ENCODE measurements at regions of chr6 and their contacts with region 1.

Region 1: GRCh38 chr6:138817822-138818308 is 22.0 kb downstream of the ECT2L start:
- DNase-seq: no peak
- ATAC-seq: peak; percentile 37 to 38
- H3K4me3 ChIP-seq: no peak overlapping the region
- H3K27ac ChIP-seq: no peak overlapping the region
- H3K4me1 ChIP-seq: peaks cover 2% of the 10 kb centered on the region
- H3K27me3 ChIP-seq: no peaks in the 10 kb centered on the region

Region 2: DNA sequence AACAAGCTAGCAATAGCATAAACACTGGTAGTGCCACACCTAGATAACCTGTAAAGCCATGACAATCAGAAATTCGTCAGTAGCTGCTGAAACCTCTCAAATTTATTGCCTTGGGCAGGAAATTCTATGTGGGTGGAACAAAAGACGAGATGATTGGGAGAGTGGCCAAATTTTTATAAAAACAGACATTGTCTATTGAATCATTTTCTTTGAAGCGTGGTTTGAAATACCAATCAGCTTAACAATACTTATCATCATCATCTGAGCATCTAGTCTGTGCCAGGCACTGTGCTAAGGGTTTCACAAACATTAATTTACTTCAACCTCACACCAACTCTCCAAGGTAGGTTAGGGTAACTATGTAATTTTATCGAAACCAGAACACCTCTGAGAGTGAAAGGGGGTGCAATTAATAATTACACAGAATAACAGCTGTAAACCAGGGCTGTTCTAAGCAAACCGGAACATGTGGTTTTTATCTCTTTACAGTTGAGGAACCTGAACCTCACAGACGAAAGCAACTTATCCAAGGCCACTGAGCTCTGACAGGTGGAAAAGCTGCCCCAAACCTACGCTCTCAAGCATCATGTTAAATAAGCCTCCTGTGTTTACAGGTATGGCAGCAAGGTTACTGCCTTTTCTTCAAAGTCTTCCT is 362.0 kb before region 1 on chr6:
- intact Hi-C with region 1: no loop called
- DNase-seq: no peak
- ATAC-seq: peak in 1 of 2 donors; percentile 41
- H3K4me3 ChIP-seq: no peak overlapping the region
- H3K27ac ChIP-seq: no peak overlapping the region
- H3K4me1 ChIP-seq: peaks cover 3% of the 10 kb centered on the region
- H3K27me3 ChIP-seq: no peaks in the 10 kb centered on the region

Region 3: GRCh38 chr6:138987640-138988468 is 170.0 kb after region 1 on chr6 and contains the start of gene REPS1:
- intact Hi-C with region 1: loop called (anchors 1 to 5 kb)
- DNase-seq: peak; percentile 93 to 97 (median 96)
- ATAC-seq: peak; percentile 98 to 99
- H3K4me3 ChIP-seq: peak within 1 kb of the TSS; percentile 95
- H3K27ac ChIP-seq: peak within 1 kb of the TSS; percentile 67
- H3K4me1 ChIP-seq: peaks cover 7% of the 10 kb centered on the region
- H3K27me3 ChIP-seq: no peaks in the 10 kb centered on the region
- total RNA-seq, gene REPS1: 35.3 to 40.9 (median 37.3) TPM

Region 4: GRCh38 chr6:139109558-139109957 is 291.7 kb after region 1 on chr6:
- intact Hi-C with region 1: loop called in 1 of 4 experiments (anchors 10 kb)
- DNase-seq: peak in 1 of 3 donors; percentile 19
- ATAC-seq: no peak
- H3K4me3 ChIP-seq: no peak overlapping the region
- H3K27ac ChIP-seq: no peak overlapping the region
- H3K4me1 ChIP-seq: no peaks in the 10 kb centered on the region
- H3K27me3 ChIP-seq: no peaks in the 10 kb centered on the region

Region 5: GRCh38 chr6:139134817-139135581 is 317.1 kb after region 1 on chr6 and contains the start of gene HECA:
- intact Hi-C with region 1: loop called in 1 of 4 experiments (anchors 10 kb)
- DNase-seq: peak; percentile 99
- ATAC-seq: peak; percentile 97
- H3K4me3 ChIP-seq: peak within 1 kb of the TSS; percentile 96
- H3K27ac ChIP-seq: peak within 1 kb of the TSS; percentile 93
- H3K4me1 ChIP-seq: peaks cover 8% of the 10 kb centered on the region
- H3K27me3 ChIP-seq: no peaks in the 10 kb centered on the region
- total RNA-seq, gene HECA: 43.7 to 50.9 (median 48.1) TPM

Region 6: DNA sequence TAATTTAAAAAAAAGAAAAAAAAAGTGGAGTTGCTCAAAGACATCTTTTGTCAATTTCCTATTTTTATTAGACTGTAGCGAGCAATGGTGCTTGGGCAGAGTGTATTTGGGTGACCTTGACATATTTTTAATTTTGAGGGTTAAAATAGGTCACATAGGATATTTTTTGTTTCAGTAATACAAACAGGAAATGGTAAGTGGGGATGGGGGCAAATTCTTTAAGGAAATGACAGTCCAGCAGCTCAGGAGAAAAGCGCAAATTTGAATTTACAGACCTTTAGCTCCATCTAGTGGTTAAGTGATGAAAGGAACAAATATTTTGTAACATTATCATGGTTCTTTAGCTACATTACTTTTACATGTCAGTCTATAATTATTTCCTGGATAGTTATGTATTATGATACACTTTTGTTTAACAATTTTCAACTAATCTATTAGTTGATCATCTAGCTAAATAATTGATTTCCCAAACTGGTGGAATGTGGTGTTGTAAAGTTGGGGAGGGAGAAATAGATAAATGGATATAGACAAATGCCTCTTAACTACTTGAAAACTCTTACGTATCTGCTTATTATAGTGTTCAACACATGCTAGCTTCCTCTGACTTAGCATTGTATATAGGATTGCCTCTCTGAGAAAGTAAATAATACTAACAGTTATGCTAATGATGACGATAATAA is 546.6 kb after region 1 on chr6:
- intact Hi-C with region 1: loop called in 2 of 4 experiments (anchors 5 to 10 kb)
- DNase-seq: no peak
- ATAC-seq: peak in 1 of 2 donors; percentile 36
- H3K4me3 ChIP-seq: no peak overlapping the region
- H3K27ac ChIP-seq: no peak overlapping the region
- H3K4me1 ChIP-seq: no peaks in the 10 kb centered on the region
- H3K27me3 ChIP-seq: no peaks in the 10 kb centered on the region